Endothelial cell of umbilical vein (primary cell): ENCODE measurements at regions of chr2 and their contacts with region 1.

Region 1: DNA sequence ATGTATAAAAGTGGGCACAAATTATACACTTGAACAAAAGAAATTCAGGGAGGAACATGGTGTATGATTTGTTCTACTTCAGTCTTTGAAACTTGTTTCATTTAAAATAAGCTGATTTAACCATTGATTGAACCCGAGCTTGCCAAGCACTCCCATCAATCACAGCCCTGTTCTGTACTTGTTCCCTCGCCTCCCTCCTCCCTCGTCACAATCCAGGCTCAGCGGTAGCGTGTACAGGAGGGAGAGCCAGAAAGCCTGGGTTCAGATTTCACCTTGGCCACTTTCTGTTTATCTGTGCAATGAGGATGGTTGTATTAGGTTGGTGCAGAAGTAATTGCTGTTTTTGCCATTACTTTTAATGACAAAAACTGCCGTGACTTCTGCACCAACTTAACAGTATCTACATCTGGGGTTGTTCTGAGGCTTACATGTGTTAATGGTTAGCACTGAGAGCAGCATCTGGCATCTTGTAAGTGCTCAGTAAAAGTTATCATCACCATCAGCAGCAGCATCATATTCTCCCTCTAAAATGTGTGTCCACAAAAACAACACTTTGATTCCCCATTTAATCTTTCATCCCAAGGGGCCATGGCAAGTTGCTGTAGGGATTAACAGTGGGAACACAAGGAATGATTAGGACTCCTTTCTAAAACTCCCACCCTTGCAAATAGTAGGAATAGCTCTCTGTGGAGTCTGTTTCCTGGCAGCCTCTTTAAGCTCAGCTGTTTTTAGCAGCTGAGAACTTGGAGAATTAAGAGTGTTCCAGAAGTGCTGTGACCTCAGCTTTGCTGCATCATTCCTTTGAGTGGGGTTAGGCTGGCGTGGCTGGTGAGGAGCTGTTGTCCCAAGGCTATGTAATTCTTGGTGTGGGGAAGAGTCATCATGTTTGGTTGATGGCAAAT is 4.7 kb downstream of the DPYSL5 start:
- DNase-seq: no peak
- H3K4me3 ChIP-seq: no peak overlapping the region
- H3K27ac ChIP-seq: no peak overlapping the region
- H3K4me1 ChIP-seq: peaks cover 4% of the 10 kb centered on the region
- H3K27me3 ChIP-seq: peaks cover 45 to 59% of the 10 kb centered on the region in 2 experiments
- CTCF ChIP-seq: no peak
- POLR2A ChIP-seq: no peak

Region 2: DNA sequence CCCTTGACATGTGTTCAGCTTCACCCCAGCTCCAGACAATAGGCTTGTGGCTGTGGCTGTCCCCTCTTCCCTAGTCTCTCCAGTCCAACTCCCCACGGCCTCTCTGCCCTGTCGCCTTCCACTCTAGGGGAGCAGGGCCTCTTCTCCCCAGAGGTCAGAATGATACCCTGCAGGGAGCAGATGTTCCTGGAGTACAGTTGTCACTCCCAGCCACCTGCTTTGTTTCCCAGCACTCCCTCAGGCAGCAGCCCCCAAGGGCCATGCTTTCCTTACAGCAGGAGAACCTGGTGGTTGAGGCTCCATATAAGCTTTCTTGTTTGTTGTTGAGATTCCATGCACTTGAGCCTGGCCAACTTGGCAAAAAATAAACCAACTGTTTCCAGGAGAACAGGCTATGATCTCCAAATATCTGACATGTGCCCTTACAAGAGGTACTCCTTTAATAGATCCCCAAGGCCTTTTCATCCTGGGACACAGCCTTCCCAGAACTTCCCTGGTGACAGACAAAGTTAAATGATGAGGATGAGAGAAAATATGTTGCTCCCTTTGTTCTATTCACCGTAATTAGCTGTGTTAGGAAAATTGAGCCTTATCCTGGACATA is 40.4 kb after region 1 on chr2:
- CTCF ChIA-PET with region 1: no interaction called
- POLR2A ChIA-PET with region 1: interaction called, 10 read pairs
- dilution Hi-C with region 1: no loop called
- intact Hi-C with region 1: no loop called
- DNase-seq: no peak
- H3K4me3 ChIP-seq: no peak overlapping the region
- H3K27ac ChIP-seq: no peak overlapping the region
- H3K4me1 ChIP-seq: no peaks in the 10 kb centered on the region
- H3K27me3 ChIP-seq: peaks cover 3 to 13% of the 10 kb centered on the region in 2 experiments
- CTCF ChIP-seq: no peak
- POLR2A ChIP-seq: no peak